ENCODE measurements at regions of chr10 and their contacts with region 1.

Region 1: DNA sequence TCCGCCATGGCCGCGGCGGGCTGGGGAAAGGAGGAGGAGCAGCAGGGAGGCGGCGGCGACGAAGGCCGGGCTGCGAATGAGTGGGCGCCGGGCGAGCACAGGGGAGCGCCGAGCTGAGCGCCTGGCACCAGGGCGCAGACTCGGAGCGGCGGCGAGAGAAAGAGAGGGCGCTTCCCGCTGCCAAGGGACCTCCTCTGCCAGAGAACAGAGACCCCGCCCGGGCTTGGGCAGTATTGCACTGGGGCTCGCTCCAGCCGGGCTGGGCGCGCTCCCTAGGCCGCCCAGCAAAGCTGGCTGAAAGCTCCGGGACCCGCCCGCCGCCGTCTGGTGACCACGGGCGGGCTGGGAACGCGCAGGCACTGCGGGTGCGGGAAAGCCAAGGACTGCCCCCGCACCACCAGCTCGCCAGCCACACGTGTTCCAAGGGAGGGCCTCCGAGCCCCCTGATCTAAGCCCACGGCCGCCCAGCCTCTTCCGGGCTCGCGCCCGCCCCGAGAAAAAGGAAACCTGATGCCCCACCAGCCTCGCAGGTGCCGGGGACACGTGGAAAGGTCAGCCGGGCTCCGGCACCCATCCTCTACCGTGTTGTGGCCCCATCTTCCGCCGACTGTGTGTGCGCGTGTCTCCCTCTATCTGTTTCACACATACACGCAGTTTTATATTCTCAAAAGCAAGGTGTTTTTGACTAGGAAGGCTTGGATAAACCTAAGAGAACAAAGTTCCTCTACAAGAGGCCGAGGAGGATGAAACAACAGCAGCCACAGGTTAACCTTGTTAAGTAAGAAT is at the start of gene CCDC6:
- DNase-seq: peak; percentile 96
- ATAC-seq: peak; percentile 83
- H3K4me3 ChIP-seq: peak within 1 kb of the TSS; percentile 53 to 96 (median 89)
- H3K4me3 Mint-ChIP-seq: peak within 1 kb of the TSS; percentile 98
- H3K27ac ChIP-seq: peak within 1 kb of the TSS; percentile 85 to 95
- H3K27ac Mint-ChIP-seq: peak within 1 kb of the TSS; percentile 96
- H3K4me1 ChIP-seq: peaks cover 40 to 42% of the 10 kb centered on the region in 2 donors
- H3K4me1 Mint-ChIP-seq: peaks cover 56% of the 10 kb centered on the region
- H3K27me3 ChIP-seq: no peaks in the 10 kb centered on the region
- H3K27me3 Mint-ChIP-seq: no peaks in the 10 kb centered on the region
- CTCF ChIP-seq: peak; percentile 82
- total RNA-seq, gene CCDC6: 30.1 and 32.1 TPM in 2 replicates

Region 2: DNA sequence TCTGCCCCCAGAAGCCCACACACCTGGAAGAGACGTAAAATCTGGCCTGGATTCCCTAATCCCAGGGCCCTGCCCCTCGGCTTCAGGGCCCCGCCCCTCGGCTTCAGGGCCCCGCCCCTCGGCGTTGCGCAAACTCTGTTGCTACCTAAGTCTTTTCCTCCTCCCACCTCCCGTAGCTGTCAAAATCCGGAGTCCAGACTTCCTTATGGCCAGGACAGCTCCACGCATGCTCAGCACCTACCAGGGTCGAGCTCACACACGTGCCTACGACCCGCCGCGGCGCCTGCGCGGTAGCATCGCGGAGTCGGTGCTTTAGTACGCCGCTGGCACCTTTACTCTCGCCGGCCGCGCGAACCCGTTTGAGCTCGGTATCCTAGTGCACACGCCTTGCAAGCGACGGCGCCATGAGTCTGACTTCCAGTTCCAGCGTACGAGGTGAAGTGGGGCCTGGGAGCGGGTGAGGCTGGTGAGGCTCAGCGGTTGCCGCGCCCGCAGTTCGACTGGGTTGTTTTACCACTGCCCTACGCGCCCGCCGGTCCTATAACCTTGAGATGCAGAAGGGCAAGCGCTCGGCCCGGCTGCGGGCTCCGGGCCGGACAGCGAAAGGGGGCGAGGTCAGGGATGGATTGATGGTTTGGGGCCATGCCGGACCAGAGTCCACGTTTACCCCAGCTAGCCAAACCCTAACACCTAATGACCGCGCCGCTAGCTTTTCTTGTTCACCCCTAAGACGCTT is 1637.6 kb before region 1 on chr10 and contains the start of gene CISD1:
- CTCF ChIA-PET with region 1: no interaction called
- POLR2A ChIA-PET with region 1: no interaction called
- intact Hi-C with region 1: loop called (anchors 5 kb)
- DNase-seq: peak; percentile 99
- ATAC-seq: peak; percentile 66
- H3K4me3 ChIP-seq: peak within 1 kb of the TSS; percentile 67 to 88 (median 76)
- H3K4me3 Mint-ChIP-seq: peak within 1 kb of the TSS; percentile 97
- H3K27ac ChIP-seq: peak within 1 kb of the TSS; percentile 89 to 98
- H3K27ac Mint-ChIP-seq: peak within 1 kb of the TSS; percentile 96
- H3K4me1 ChIP-seq: peaks cover 25 to 33% of the 10 kb centered on the region in 2 donors
- H3K4me1 Mint-ChIP-seq: peaks cover 36% of the 10 kb centered on the region
- H3K27me3 ChIP-seq: no peaks in the 10 kb centered on the region
- H3K27me3 Mint-ChIP-seq: no peaks in the 10 kb centered on the region
- CTCF ChIP-seq: no peak
- total RNA-seq, gene CISD1: 6.3 and 7.3 TPM in 2 replicates

Region 3: DNA sequence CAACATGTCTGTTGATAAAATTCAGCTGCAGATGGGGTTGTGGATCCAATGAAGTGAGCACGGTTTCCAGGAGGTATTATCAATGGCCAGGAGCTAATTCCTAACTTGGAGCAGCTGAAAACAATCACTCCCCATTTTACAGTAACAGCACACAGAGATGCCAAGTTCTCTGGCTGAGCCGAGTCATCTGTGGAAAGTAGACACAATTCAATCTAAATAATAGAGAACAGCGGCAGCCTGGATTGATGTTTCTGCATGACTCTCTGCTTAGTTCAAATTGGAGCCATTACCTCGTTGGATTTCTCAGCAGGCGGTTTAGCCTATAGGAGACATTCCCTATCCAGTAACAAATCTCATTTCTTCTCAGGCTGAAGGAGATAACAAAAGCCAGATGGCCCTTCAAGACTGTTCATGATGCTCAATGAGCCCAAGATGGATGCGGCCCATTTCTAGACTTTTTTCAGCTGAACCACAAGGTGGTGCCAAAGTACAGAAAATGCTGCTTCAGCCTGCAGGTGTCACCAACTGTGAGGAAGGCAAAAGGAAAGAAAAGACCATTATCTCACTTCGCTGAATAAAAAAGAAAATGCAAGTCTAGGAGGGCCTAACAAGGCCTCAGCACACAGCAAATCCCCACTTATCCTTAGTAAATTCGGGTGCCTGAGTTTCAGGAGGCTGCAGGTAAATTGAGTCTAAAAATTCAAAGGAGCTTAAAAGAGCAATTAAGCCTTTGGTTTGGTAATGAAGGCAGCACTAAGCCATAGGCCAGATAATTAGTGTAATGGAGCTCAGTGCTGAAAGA is 280.7 kb before region 1 on chr10:
- CTCF ChIA-PET with region 1: interaction called, 7 read pairs
- POLR2A ChIA-PET with region 1: no interaction called
- intact Hi-C with region 1: loop called (anchors 1 kb)
- DNase-seq: peak; percentile 78
- ATAC-seq: peak; percentile 89
- H3K4me3 ChIP-seq: no peak overlapping the region
- H3K4me3 Mint-ChIP-seq: no peak overlapping the region
- H3K27ac ChIP-seq: no peak overlapping the region
- H3K27ac Mint-ChIP-seq: no peak overlapping the region
- H3K4me1 ChIP-seq: no peaks in the 10 kb centered on the region
- H3K4me1 Mint-ChIP-seq: peaks cover 3% of the 10 kb centered on the region
- H3K27me3 ChIP-seq: no peaks in the 10 kb centered on the region
- H3K27me3 Mint-ChIP-seq: no peaks in the 10 kb centered on the region
- CTCF ChIP-seq: peak; percentile 87

Region 4: DNA sequence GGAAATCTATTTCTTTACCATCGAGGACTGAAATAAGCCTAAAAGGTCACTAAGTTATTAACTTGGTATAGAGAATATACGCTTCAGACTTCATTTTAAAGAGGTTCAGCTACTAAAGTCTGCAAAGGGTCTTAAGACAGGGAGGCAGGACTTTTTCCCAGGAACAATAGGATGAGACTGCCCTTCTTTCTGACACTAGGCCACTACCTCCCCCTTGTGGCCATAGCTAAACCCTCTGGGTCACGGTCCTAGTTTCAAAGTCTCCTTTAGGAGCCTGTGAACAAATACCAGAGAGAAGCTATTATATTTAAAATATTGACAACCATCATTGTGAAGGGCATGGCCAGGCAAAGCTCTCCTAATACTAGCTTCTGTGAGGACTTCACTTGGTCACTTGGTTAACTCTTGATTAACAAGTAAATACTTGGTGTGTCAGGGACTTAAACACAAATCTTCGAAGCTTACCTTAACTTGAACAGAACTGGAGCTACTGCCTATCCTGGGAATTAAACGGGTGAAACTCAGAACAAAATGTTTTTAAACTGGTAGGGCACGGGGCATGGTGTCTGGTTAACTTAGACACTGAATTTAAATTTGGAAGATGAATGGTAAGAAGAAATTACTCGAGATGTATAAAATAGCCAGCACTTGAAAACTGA is 75.9 kb before region 1 on chr10:
- CTCF ChIA-PET with region 1: interaction called, 50 read pairs
- POLR2A ChIA-PET with region 1: interaction called, 5 read pairs
- intact Hi-C with region 1: loop called (anchors 1 kb)
- DNase-seq: peak; percentile 54
- ATAC-seq: no peak
- H3K4me3 ChIP-seq: no peak overlapping the region
- H3K4me3 Mint-ChIP-seq: no peak overlapping the region
- H3K27ac ChIP-seq: no peak overlapping the region
- H3K27ac Mint-ChIP-seq: no peak overlapping the region
- H3K4me1 ChIP-seq: peaks cover 24 to 36% of the 10 kb centered on the region in 2 donors
- H3K4me1 Mint-ChIP-seq: peaks cover 72% of the 10 kb centered on the region
- H3K27me3 ChIP-seq: no peaks in the 10 kb centered on the region
- H3K27me3 Mint-ChIP-seq: no peaks in the 10 kb centered on the region
- CTCF ChIP-seq: peak; percentile 75

Region 5: DNA sequence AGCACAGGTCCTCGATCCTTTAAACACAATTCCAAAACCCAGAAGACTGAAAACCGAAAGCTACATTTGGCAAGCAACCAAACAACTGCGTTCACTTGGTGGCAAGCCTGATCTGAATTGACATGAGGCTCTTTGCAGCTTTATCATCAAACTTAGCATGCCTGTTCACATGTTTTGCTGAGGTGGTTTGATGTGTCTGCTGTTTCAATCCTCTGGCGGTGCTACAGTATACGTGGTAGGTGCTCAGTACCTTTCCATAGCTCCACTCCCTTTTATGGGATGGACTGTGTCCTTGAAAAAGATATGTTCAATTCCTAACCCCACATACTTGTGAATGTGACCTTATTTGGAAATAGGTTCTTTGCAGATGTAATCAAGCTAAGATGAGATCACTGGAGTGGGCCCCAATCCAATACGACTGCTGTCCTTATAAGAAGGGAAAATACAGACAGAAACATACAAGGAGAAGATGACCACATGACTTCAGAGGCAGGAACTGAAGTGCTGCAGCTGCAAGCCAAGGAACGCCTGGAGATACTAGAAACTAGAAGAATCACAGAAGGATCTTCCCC is 33.6 kb before region 1 on chr10:
- CTCF ChIA-PET with region 1: interaction called, 175 read pairs
- POLR2A ChIA-PET with region 1: interaction called, 5 read pairs
- intact Hi-C with region 1: no loop called
- DNase-seq: no peak
- ATAC-seq: no peak
- H3K4me3 ChIP-seq: no peak overlapping the region
- H3K4me3 Mint-ChIP-seq: peak overlapping the region; percentile 33
- H3K27ac ChIP-seq: peak overlapping the region; percentile 11 to 64
- H3K27ac Mint-ChIP-seq: peak overlapping the region; percentile 16
- H3K4me1 ChIP-seq: peaks cover 52 to 56% of the 10 kb centered on the region in 2 donors
- H3K4me1 Mint-ChIP-seq: peaks cover 89% of the 10 kb centered on the region
- H3K27me3 ChIP-seq: no peaks in the 10 kb centered on the region
- H3K27me3 Mint-ChIP-seq: no peaks in the 10 kb centered on the region
- CTCF ChIP-seq: no peak

Region 6: DNA sequence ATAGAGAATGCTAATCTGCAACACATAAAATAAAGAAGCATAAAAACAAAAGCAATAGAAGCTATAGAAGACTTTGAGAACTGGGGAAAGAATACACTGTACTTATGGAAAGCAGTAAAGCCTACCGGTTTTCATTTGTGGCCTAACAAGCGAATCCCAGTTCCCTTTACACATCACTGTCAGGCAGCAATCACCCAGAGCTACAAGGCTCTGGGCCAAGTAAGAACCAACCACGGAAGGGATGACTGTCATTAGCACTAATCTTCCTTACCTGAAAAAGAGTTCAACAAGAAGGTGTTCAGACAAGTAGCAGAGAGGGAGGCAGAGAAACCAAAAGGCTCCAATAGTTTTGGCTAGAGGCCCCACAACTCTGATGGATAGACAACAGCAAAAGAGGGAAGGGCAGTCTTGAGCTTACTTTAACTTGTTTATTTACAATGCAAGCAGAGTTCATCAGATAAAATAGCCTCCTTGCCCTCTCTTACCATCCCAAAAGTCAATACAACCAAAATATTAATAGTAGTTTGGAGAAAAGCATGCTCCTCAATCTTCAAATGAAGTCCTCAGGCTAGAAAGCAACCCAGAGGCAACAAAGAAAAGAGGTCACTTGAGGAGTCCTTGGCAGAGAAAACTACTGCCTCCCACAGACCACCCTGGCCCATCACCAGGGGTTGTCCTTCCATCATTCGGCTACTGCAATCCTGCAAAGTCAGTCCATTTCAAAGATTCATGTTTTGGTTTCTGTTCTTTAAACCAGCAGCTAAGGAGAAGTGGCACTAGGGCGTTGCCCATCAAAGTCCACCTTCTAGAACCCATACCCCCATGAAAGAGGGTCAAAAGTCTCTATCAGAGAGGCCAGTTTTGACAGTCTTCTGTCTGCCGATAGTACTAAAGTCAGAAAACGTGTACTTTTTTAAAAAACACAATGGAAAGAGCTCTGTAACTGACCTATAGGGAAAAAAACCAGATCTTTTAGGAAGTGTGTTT is 15.0 kb before region 1 on chr10:
- CTCF ChIA-PET with region 1: interaction called, 12 read pairs
- POLR2A ChIA-PET with region 1: interaction called, 4 read pairs
- intact Hi-C with region 1: no loop called
- DNase-seq: no peak
- ATAC-seq: peak; percentile 43
- H3K4me3 ChIP-seq: peak overlapping the region in 2 of 5 experiments; percentile 3 to 52
- H3K4me3 Mint-ChIP-seq: peak overlapping the region; percentile 62
- H3K27ac ChIP-seq: peak overlapping the region; percentile 5 to 44
- H3K27ac Mint-ChIP-seq: peak overlapping the region; percentile 89
- H3K4me1 ChIP-seq: peaks cover 48 to 72% of the 10 kb centered on the region in 2 donors
- H3K4me1 Mint-ChIP-seq: peaks cover 89% of the 10 kb centered on the region
- H3K27me3 ChIP-seq: no peaks in the 10 kb centered on the region
- H3K27me3 Mint-ChIP-seq: no peaks in the 10 kb centered on the region
- CTCF ChIP-seq: no peak

Region 7: DNA sequence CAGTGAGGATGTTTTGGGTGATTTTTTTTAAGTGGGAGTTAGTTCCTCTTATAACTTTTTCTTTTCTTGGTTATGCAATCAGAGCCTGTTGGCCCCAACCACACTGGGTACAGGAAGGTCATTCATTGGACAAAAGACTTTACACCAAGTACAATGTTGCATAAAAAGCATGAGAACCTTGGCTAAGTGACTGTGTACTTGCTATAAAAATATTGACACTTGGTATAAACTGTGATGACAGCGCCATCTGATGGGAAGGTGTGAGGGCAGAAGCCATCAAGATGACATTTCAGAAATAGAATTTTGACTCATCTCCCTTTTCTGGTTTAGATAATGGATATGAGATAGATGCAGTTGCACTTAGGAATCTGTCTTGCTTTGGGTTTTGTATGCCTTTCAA is 126.1 kb after region 1 on chr10:
- CTCF ChIA-PET with region 1: interaction called, 3 read pairs
- POLR2A ChIA-PET with region 1: no interaction called
- intact Hi-C with region 1: loop called (anchors 2 kb)
- DNase-seq: peak; percentile 67
- ATAC-seq: peak; percentile 36
- H3K4me3 ChIP-seq: no peak overlapping the region
- H3K4me3 Mint-ChIP-seq: no peak overlapping the region
- H3K27ac ChIP-seq: no peak overlapping the region
- H3K27ac Mint-ChIP-seq: no peak overlapping the region
- H3K4me1 ChIP-seq: peaks cover 6 to 7% of the 10 kb centered on the region in 2 donors
- H3K4me1 Mint-ChIP-seq: peaks cover 10% of the 10 kb centered on the region
- H3K27me3 ChIP-seq: no peaks in the 10 kb centered on the region
- H3K27me3 Mint-ChIP-seq: no peaks in the 10 kb centered on the region
- CTCF ChIP-seq: peak; percentile 67

Measured in B cell (primary cell).